Activated naive CD4-positive, alpha-beta T cell treated with anti-CD3 and anti-CD28 coated beads for 36 hours (primary cell): ENCODE measurements at regions of chr5 and their contacts with region 1.

Region 1: GRCh38 chr5:34486160-34486848 is 169.8 kb upstream of the RAI14 start:
- DNase-seq: peak; percentile 87
- H3K4me3 Mint-ChIP-seq: no peak overlapping the region
- H3K27ac Mint-ChIP-seq: no peak overlapping the region
- H3K4me1 Mint-ChIP-seq: no peaks in the 10 kb centered on the region
- H3K27me3 Mint-ChIP-seq: peaks cover 29% of the 10 kb centered on the region

Region 2: GRCh38 chr5:33291216-33292000 is 1194.9 kb before region 1 on chr5:
- CTCF ChIA-PET with region 1: no interaction called
- intact Hi-C with region 1: no loop called
- DNase-seq: no peak
- H3K4me3 Mint-ChIP-seq: no peak overlapping the region
- H3K27ac Mint-ChIP-seq: no peak overlapping the region
- H3K4me1 Mint-ChIP-seq: no peaks in the 10 kb centered on the region
- H3K27me3 Mint-ChIP-seq: peaks cover 9% of the 10 kb centered on the region

Region 3: DNA sequence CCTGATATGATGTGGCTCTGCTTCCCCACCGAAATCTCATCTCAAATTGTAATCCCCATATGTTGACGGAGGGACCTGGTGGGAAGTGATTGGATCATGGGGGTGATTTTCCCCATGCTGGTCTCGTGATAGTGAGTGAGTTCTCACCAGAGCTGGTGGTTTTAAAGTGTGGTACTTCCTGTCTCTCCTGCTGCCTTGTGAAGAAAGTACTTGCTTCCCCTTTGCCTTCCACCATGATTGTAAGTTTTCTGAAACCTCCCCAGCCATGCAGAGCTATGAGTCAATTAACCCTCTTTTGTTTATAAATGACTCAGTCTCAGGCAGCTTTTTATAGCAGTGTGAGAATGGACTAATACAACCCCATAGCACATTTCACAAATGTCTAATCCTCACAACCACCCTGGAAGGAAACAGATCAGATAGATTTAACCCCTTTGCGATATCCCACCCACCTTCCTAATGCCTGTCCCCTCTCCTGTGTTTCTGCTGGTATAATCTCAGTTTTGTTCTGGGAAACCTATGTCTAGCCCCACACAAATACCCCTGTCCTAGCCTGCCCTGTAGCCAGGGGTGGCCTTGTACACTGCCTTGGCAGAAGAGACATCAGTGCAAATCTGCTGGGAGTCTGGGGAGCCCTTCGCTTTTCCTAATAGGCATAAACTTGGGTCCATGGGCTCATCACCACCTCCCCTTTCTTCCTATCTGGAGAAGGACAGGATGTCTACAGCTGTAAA is 12.9 kb after region 1 on chr5:
- CTCF ChIA-PET with region 1: interaction called, 20 read pairs
- intact Hi-C with region 1: no loop called
- DNase-seq: peak; percentile 63
- H3K4me3 Mint-ChIP-seq: no peak overlapping the region
- H3K27ac Mint-ChIP-seq: peak overlapping the region; percentile 74
- H3K4me1 Mint-ChIP-seq: peaks cover 13% of the 10 kb centered on the region
- H3K27me3 Mint-ChIP-seq: peaks cover 18% of the 10 kb centered on the region

Region 4: DNA sequence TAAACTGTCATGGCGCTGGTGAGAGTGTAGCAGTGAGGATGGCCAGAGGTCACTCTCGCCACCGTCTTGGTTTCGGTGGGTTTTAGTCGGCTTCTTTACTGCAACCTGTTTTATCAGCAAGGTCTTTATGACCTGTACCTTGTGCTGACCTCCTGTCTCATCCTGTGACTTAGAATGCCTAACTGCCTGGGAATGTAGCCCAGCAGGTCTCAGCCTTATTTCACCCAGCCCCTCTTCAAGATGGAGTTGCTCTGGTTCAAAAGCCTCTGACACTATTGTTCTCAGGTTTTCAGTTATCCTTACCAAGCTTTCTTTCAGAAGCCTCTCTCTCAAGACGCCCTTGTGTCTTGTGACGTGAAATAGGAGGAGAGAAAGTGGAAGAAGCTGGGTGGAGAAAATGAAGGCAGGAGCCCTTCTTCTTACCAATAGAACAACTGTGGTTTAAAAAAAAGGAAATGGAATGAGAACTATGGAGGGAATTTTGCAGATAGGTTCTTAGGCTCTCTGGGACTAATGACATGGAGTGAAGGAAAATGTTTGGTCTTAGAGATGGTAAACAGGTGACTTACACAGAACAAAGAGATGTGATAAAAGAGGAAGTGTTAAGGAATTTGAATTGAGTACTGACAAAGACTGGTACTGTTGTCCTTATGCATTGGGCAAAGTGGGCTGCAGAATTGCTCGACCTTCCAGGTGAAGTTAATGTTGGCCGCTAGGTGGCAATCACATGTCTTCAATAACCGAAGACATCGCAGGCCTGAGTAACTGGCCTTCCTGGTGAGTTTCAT is 36.5 kb after region 1 on chr5:
- CTCF ChIA-PET with region 1: interaction called, 22 read pairs
- intact Hi-C with region 1: loop called (anchors 1 kb)
- DNase-seq: peak; percentile 73
- H3K4me3 Mint-ChIP-seq: no peak overlapping the region
- H3K27ac Mint-ChIP-seq: no peak overlapping the region
- H3K4me1 Mint-ChIP-seq: peaks cover 4% of the 10 kb centered on the region
- H3K27me3 Mint-ChIP-seq: peaks cover 3% of the 10 kb centered on the region

Region 5: DNA sequence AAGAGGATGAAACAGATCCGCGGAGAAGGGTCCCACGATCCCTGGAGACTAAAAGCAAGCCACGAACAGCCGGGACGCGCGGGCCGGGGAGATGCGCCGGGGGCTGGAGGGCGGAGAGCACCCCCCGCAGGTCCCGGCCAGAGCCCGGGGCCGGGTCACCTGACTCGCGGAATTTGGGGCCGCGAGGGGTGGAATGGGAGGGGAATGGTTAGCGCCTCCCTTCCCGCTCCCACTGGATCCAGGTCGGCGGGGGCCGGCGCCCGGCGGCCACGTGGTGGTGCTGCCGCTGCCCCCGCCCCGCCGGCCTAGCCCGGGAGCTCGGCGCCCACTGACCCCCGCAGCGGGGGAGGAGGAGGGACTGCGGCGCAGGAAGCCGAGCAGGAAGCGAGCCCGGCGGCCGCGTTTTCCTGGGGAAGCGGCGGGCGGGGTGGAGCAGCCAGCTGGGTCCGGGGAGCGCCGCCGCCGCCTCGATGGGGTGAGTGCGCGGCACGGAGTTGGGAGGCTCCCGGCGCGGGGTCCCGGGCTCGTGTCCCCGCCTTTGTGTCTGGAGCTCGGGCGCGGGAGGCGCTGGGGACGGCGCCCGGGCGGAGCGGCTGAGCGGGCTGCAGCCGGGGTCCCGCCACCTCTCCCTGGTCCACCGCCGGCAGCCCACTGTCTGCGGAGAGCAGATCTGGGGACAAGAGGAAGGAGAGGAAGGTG is 169.8 kb after region 1 on chr5 and contains the start of gene RAI14:
- CTCF ChIA-PET with region 1: interaction called, 5 read pairs
- intact Hi-C with region 1: loop called (anchors 5 kb)
- DNase-seq: peak; percentile 35
- H3K4me3 Mint-ChIP-seq: peak within 1 kb of the TSS; percentile 78
- H3K27ac Mint-ChIP-seq: peak within 1 kb of the TSS; percentile 8
- H3K4me1 Mint-ChIP-seq: peaks cover 17% of the 10 kb centered on the region
- H3K27me3 Mint-ChIP-seq: peaks cover 31% of the 10 kb centered on the region
- total RNA-seq, gene RAI14: 5.8 to 6.7 TPM

Region 6: GRCh38 chr5:34695275-34696027 is 209.1 kb after region 1 on chr5:
- CTCF ChIA-PET with region 1: no interaction called
- intact Hi-C with region 1: loop called (anchors 2 kb)
- DNase-seq: no peak
- H3K4me3 Mint-ChIP-seq: no peak overlapping the region
- H3K27ac Mint-ChIP-seq: no peak overlapping the region
- H3K4me1 Mint-ChIP-seq: peaks cover 20% of the 10 kb centered on the region
- H3K27me3 Mint-ChIP-seq: no peaks in the 10 kb centered on the region

Region 7: DNA sequence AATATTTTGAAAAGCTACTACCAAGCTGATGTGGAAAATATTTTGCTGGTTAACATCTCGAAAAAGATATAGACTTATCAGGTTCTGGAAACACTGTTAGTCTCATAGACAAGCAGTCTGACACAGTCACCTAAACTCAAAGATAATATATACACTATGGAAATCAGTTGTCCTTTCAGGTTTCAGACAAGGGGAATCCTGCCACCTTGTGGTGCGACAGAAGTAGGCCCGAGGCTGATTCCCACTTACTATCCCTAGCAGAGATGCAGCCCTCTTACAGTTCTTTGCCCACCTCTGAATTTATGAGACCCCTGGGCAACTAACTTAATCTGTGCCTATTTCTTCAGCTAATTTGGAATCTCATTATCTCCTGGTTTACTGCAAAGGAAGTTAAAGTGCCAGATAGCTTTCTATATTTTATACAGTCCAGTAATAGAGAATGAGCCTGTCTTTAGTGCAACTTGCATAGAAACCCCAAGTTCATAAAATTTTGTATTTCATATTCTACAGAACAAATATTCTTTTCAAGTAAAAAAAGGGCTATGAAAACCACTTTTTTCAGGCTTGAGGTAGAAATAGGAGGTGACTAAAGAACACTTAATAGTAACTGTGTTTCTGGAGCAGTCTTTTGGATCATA is 412.1 kb after region 1 on chr5:
- CTCF ChIA-PET with region 1: interaction called, 15 read pairs
- intact Hi-C with region 1: loop called (anchors 1 kb)
- DNase-seq: peak; percentile 77
- H3K4me3 Mint-ChIP-seq: no peak overlapping the region
- H3K27ac Mint-ChIP-seq: no peak overlapping the region
- H3K4me1 Mint-ChIP-seq: no peaks in the 10 kb centered on the region
- H3K27me3 Mint-ChIP-seq: no peaks in the 10 kb centered on the region

Region 8: DNA sequence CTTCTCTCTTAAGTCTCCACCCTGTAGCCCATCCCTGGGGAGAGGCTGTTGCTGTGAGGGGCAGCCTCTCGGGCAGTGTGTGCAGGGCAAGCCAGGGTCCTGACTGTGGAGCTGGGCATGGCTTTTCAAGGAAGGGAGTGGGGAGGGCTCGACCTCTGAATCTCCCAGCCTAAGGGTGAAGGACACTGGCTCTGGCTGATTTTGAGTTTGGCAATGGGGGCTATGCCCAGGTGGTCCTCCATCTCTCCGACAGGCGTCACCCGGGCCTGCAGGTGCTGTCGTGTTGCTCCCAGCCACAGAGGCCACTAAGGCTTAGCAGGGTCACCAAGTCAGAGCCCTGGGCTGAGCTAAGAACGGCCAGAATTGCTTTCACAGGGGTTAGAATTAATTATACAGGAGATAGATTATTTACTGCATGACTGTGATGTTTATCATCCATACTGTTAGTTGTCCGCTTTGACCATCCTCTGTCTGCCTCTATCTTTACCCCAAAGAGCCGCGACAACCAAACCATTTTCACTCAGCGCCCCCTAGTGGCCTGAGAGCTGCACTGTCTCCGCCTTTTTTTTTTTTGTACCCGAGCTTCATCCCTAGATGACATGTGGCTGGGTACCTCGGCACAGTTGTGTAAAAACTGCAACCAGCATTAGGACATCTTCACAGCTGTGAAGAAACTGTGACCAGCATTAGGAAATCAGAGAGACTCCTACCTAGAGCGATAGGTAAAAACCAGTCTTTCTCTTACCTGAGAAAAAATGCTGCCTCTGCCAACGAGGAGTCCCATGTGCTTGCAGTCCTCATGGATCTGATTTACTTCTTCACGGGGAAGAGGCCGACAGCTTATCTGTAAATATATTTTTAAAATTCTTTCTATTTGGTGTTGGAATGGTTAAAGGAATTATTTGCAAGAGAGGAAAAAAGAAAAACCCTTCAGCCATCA is 517.0 kb after region 1 on chr5:
- CTCF ChIA-PET with region 1: interaction called, 13 read pairs
- intact Hi-C with region 1: loop called (anchors 1 kb)
- DNase-seq: peak; percentile 76
- H3K4me3 Mint-ChIP-seq: no peak overlapping the region
- H3K27ac Mint-ChIP-seq: no peak overlapping the region
- H3K4me1 Mint-ChIP-seq: no peaks in the 10 kb centered on the region
- H3K27me3 Mint-ChIP-seq: peaks cover 16% of the 10 kb centered on the region